Head of caudate nucleus (tissue), 42 donors: ENCODE measurements at regions of chr15 and their contacts with region 1.

Region 1: GRCh38 chr15:32659340-32660155 is 18.0 kb downstream of the SCG5 start:
- DNase-seq: no peak

Region 2: GRCh38 chr15:32636908-32637567 is 22.5 kb before region 1 on chr15:
- intact Hi-C with region 1: no loop called
- DNase-seq: no peak

Region 3: DNA sequence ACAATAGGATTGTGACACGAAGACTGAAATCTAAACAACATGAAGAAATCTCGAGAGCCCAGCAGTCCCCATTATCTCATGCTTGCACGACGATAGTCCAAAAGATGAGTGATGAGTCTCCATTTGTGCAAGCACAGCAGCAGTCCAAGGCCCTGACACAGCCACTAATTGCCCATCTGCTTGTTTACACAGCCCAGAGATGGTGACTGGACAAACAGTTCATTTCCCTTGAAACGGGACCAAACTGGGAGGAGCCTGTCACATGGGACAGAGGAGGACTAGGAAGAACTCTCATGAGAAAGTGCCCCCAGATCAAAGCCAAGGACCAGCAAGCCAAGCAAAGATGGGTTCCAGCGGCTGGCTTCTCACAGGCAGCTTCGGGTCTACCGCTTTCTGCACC is 179.3 kb after region 1 on chr15:
- intact Hi-C with region 1: loop called (anchors 5 kb)
- DNase-seq: peak; percentile 38 to 93 (median 78)

Region 4: GRCh38 chr15:32994810-32995424 is 335.4 kb after region 1 on chr15:
- intact Hi-C with region 1: loop called (anchors 10 kb)
- DNase-seq: peak in 1 of 42 donors; percentile 8